ENCODE measurements at regions of chr12 and their contacts with region 1.

Region 1: GRCh38 chr12:98861251-98861650 is 216.2 kb downstream of the APAF1 start:
- DNase-seq: no peak
- H3K4me3 ChIP-seq: no peak overlapping the region
- H3K27ac ChIP-seq: no peak overlapping the region
- H3K4me1 ChIP-seq: no peaks in the 10 kb centered on the region
- H3K27me3 ChIP-seq: no peaks in the 10 kb centered on the region
- CTCF ChIP-seq: no peak
- POLR2A ChIP-seq: no peak

Region 2: DNA sequence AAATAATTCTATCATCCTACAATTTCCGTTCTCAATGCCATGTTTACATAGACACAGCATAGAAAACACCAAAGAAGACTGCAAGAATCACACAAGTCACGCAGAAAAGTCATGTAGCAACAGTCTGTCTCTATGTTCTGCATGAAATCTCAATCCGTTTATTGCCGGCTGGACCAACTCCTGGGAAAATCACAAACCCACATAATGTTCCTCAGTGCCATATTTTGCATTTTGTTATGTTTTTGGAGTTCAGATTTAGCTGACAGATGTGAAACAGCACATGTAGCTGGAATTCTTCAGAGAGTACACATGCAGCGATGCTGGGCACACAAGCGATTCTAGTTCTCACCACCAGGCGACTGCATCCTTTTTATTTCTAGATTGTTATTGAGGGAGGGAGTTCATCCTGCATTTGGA is 23.0 kb before region 1 on chr12:
- intact Hi-C with region 1: loop called (anchors 1 kb)
- DNase-seq: no peak
- H3K4me3 ChIP-seq: no peak overlapping the region
- H3K27ac ChIP-seq: no peak overlapping the region
- H3K4me1 ChIP-seq: no peaks in the 10 kb centered on the region
- H3K27me3 ChIP-seq: no peaks in the 10 kb centered on the region
- CTCF ChIP-seq: peak in 1 of 3 donors; percentile 19
- POLR2A ChIP-seq: no peak

Region 3: GRCh38 chr12:98909749-98910148 is 48.5 kb after region 1 on chr12:
- intact Hi-C with region 1: no loop called
- DNase-seq: no peak
- H3K4me3 ChIP-seq: no peak overlapping the region
- H3K27ac ChIP-seq: no peak overlapping the region
- H3K4me1 ChIP-seq: no peaks in the 10 kb centered on the region
- H3K27me3 ChIP-seq: no peaks in the 10 kb centered on the region
- CTCF ChIP-seq: no peak
- POLR2A ChIP-seq: no peak

Region 4: DNA sequence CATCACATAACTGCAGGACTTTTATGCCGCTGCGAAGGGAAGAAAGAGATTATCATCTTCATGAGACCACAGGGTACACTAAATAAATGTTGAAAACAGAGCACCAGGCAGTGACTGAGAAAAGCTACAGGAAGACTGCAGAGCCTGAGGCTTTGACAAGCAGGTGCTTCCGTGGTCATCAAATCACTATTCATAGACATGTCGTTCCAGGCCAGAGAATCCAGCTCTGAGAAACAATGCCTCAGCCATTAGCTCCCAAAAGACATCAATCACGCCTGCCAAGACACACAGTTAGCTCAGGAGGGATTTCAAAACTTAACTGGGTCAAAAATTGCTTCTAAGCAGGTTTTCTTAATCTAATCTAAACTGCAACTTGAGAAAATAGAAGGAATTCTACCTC is 739.1 kb after region 1 on chr12:
- intact Hi-C with region 1: no loop called
- DNase-seq: no peak
- H3K4me3 ChIP-seq: no peak overlapping the region
- H3K27ac ChIP-seq: no peak overlapping the region
- H3K4me1 ChIP-seq: no peaks in the 10 kb centered on the region
- H3K27me3 ChIP-seq: no peaks in the 10 kb centered on the region
- CTCF ChIP-seq: no peak
- POLR2A ChIP-seq: no peak

Measured in breast epithelium (tissue), 4 donors.